Left cardiac atrium (tissue), 4 donors: ENCODE measurements at regions of chr2 and their contacts with region 1.

Region 1: DNA sequence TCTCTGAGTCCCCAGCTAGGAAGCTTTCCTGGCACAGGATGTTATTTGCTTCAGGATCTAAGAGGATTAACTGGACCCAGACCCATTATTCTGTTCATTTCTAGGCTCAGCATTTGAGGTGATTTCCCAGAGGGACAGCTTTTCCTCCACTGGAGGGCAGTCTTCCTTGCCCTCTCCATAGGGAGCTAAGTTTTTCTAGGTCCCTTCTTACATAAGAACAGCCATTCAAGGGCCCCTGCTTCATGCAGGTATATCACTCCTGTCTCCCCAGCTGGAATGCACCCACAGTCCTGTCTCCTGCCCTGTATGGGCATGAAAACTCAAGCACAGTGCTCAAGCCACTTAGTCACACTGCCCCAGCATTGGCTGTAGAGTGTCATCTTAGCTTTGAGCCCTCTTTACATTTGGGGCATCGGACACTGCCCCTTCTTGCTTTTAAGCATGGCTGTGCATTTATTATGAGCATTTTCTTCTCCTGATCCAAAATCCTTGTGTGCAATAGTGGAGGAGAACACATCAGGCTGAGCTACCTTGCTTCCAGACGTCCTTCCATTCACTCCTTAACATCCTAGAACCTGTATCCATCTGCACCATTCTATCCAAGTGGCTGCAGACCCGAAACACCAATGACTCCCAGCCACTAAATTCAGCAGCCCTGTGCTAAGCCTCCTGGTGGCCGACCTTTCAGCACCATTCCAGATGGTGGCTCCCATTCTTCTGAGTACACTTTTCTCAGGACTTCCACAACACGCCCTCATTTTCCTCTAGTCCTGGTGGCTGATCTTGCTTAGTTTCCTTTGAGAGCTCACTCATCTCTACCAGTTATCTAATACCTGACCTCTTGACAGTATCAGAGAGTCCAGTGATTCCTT is 80.0 kb downstream of the COPS8 start:
- DNase-seq: no peak
- ATAC-seq: peak in 1 of 2 donors; percentile 35

Region 2: GRCh38 chr2:237322564-237322963 is 156.9 kb after region 1 on chr2:
- intact Hi-C with region 1: loop called in 1 of 2 experiments (anchors 5 kb)
- DNase-seq: no peak
- ATAC-seq: no peak

Region 3: GRCh38 chr2:237408335-237409000 is 242.8 kb after region 1 on chr2:
- intact Hi-C with region 1: loop called (anchors 5 kb)
- DNase-seq: no peak
- ATAC-seq: peak; percentile 40 to 47

Region 4: DNA sequence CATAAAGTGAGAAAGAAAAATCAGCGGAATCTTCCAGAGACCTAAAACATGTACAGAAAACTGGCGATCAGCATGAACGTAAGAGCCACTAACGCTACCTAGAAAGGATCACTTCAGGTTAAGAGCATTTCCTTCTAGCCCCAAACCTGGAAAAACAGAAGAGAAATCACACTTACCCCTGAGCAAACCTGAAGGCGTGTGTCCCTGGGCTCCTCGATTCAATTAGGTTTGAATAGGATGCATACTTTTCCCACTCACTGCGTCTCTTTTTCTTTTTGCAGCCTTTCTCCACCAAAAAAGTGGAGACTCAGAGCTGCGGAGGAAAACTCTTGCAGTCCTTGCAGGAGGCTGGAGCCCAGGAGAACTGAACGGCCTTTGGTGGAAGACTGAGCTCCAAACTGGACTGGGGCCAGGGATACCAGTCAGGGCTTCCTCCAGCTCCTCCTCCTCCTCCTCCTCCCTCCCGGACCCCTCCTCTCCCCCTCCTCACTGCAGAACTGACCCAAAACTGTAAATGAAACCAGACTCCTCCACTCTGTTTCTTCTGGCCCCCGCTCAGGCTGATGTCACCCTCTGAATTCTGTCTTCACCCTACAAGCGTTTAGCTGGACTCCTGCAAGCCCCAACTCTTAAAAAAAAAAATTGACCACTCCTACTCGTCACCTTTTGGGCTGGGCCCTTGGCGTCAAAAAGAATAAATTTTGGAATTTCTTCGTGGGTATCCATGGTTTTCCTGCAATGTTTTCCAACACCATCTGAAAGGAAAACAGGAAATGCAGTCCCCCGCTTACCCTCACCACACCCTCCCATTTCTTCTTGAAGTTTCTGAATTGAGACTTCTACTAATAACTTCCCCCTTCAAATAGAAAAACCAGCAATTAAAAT is 248.4 kb after region 1 on chr2 and contains the start of gene COL6A3:
- intact Hi-C with region 1: loop called (anchors 5 kb)
- DNase-seq: peak; percentile 78
- ATAC-seq: peak; percentile 66 to 79
- total RNA-seq, gene COL6A3: 145 to 186 TPM